K562 (cell line): ENCODE measurements at regions of chr18 and their contacts with region 1.

Region 1: DNA sequence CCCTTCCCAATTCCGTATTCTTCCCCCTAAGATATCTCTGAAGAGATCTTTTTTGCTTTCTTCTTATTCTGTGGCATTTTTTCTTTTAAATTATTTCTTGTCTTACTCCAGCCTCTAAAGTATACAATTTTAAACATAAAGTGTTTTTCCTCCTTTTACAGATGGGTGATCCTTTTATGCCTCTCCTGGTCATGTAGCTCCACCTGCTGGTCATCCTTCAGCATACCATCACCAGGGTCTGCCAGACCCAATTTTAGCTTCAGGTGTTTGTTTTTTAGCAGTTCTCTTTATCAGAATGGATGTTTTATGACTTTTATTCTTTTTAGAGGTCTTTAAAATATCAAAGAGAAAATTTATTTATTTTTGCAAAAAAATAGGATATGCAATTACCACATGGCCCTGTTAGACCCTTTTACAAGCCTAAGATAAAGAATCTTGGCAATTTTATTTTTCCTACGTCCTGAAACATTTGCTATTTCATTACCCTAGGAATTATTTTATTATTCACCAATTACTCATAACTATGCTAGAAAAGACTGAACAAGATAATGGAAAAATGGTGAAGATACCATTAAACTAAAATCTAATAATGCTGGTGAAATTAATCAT is 55.5 kb downstream of the PIGN start:
- DNase-seq: peak; percentile 43 to 64 (median 62)
- ATAC-seq: peak; percentile 79
- H3K4me3 ChIP-seq: no peak overlapping the region
- H3K27ac ChIP-seq: no peak overlapping the region
- H3K4me1 ChIP-seq: no peaks in the 10 kb centered on the region
- H3K27me3 ChIP-seq: no peaks in the 10 kb centered on the region
- CTCF ChIP-seq: peak; percentile 62 to 77 (median 65)
- EP300 ChIP-seq: no peak
- POLR2A ChIP-seq: no peak
- RAD21 ChIP-seq: peak; percentile 72 to 81

Region 2: GRCh38 chr18:61581578-61582201 is 549.7 kb before region 1 on chr18:
- CTCF ChIA-PET with region 1: interaction called, 6 read pairs
- POLR2A ChIA-PET with region 1: no interaction called
- in situ Hi-C with region 1: loop called (anchors 25 kb)
- intact Hi-C with region 1: loop called (anchors 5 kb)
- DNase-seq: peak; percentile 45 to 77 (median 74)
- ATAC-seq: peak; percentile 97
- H3K4me3 ChIP-seq: no peak overlapping the region
- H3K27ac ChIP-seq: no peak overlapping the region
- H3K4me1 ChIP-seq: peaks cover 0 to 4% of the 10 kb centered on the region in 2 experiments; a peak in 2 of 5 replicates
- H3K27me3 ChIP-seq: no peaks in the 10 kb centered on the region
- CTCF ChIP-seq: peak; percentile 62 to 76 (median 69)
- EP300 ChIP-seq: no peak
- POLR2A ChIP-seq: no peak
- RAD21 ChIP-seq: peak; percentile 38 to 60

Region 3: DNA sequence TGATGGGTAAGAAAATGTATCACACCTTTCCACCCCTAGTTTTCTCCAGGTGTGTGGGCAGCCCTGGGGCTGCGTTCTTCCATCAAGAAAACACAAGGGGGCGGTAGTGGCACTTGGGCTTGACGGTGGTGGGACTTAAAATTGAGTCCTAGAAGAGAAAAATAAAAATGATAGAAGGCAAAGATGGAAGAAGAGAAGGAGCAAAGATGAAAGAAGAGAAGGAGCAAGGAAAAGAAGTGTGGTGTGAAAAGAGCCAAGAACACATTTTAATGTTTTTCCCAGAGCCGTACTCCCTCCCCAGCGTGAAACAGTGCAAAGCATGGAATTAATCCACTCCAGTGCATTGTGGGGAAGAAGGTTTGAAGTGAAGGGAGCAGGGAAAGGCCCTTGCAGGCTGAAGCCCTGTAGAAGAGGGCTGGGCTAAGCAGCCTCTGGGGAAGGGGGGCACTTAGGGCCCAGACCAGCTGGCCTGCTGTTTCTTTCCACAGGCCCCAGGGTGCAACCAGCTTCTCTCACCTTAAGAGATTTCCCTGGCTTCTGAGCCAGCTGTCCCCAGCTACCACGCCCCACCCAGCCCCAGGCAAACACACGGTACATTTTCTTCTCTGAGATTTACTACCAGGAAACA is 495.4 kb before region 1 on chr18:
- CTCF ChIA-PET with region 1: interaction called, 3 read pairs
- POLR2A ChIA-PET with region 1: no interaction called
- in situ Hi-C with region 1: no loop called
- intact Hi-C with region 1: loop called (anchors 2 kb)
- DNase-seq: peak; percentile 9 to 35 (median 26)
- ATAC-seq: peak; percentile 77
- H3K4me3 ChIP-seq: no peak overlapping the region
- H3K27ac ChIP-seq: no peak overlapping the region
- H3K4me1 ChIP-seq: no peaks in the 10 kb centered on the region
- H3K27me3 ChIP-seq: no peaks in the 10 kb centered on the region
- CTCF ChIP-seq: peak; percentile 55 to 63 (median 55)
- EP300 ChIP-seq: no peak
- POLR2A ChIP-seq: no peak
- RAD21 ChIP-seq: peak; percentile 22 to 52; a peak in 3 of 4 replicates

Region 4: DNA sequence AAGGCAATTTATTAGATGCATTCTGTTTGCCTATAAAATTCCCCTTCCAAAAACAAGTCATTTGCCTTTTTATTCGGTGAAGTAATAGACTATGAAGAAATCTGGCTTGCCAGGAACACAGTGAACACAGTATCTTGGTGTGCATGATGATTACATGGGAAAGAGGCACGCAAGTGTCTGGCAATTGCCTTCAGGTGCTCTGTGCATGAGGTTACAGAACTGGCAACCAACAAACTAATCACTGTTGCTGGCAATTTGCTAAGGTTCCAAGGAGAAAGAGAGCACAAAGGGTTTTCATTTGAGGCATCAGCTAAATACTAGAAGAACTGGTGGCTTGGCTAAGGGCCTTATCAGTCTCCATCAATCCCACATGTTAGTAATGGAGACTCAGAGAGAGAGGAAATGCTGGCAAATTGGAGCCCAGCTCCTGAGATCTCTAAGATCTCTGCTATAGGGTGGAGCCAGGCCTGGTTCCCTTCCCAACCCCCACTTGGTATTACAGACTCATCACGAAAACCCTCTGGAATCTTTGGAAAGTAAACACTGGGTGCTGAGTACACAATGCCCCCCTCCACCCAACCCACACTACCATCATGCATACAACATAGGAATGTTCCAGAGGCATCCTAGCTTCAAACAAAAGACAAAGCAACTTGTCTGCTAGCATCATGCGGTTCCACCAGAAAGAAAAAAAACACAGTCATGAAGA is 249.0 kb before region 1 on chr18:
- CTCF ChIA-PET with region 1: no interaction called
- POLR2A ChIA-PET with region 1: no interaction called
- in situ Hi-C with region 1: no loop called
- intact Hi-C with region 1: no loop called
- DNase-seq: no peak
- ATAC-seq: no peak
- H3K4me3 ChIP-seq: no peak overlapping the region
- H3K27ac ChIP-seq: no peak overlapping the region
- H3K4me1 ChIP-seq: no peaks in the 10 kb centered on the region
- H3K27me3 ChIP-seq: no peaks in the 10 kb centered on the region
- CTCF ChIP-seq: no peak
- EP300 ChIP-seq: no peak
- POLR2A ChIP-seq: no peak
- RAD21 ChIP-seq: no peak

Region 5: GRCh38 chr18:61901323-61901986 is 229.9 kb before region 1 on chr18:
- CTCF ChIA-PET with region 1: no interaction called
- POLR2A ChIA-PET with region 1: no interaction called
- in situ Hi-C with region 1: no loop called
- intact Hi-C with region 1: loop called (anchors 5 kb)
- DNase-seq: peak; percentile 43 to 58 (median 56)
- ATAC-seq: peak; percentile 96
- H3K4me3 ChIP-seq: no peak overlapping the region
- H3K27ac ChIP-seq: no peak overlapping the region
- H3K4me1 ChIP-seq: no peaks in the 10 kb centered on the region; a peak in 2 of 5 replicates
- H3K27me3 ChIP-seq: no peaks in the 10 kb centered on the region; a peak in 1 of 5 replicates
- CTCF ChIP-seq: peak; percentile 66 to 77 (median 68)
- EP300 ChIP-seq: no peak
- POLR2A ChIP-seq: no peak
- RAD21 ChIP-seq: peak; percentile 26 to 48; a peak in 2 of 4 replicates

Region 6: GRCh38 chr18:61972389-61973264 is 158.8 kb before region 1 on chr18:
- CTCF ChIA-PET with region 1: no interaction called
- POLR2A ChIA-PET with region 1: no interaction called
- in situ Hi-C with region 1: no loop called
- intact Hi-C with region 1: no loop called
- DNase-seq: no peak
- ATAC-seq: no peak
- H3K4me3 ChIP-seq: no peak overlapping the region
- H3K27ac ChIP-seq: no peak overlapping the region
- H3K4me1 ChIP-seq: no peaks in the 10 kb centered on the region; a peak in 1 of 5 replicates
- H3K27me3 ChIP-seq: no peaks in the 10 kb centered on the region
- CTCF ChIP-seq: no peak
- EP300 ChIP-seq: no peak
- POLR2A ChIP-seq: no peak
- RAD21 ChIP-seq: no peak

Region 7: DNA sequence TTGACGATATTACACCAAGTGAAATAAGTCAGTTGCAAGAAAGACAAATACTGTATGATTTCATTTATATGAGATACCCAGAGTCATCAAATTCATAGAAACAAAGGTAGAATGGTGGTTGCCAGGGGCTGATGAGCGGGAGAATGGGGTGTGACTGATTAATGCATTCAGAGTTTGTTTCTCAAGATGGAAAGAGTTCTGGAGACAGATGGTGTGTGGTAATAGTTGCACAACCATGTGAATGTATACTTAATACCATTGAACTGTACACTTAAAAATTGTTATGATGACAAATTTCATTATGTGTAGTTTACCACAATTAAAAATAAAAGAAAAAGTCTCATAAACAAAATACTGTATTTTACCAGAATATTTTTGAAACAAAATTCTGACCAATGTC is 61.8 kb before region 1 on chr18:
- CTCF ChIA-PET with region 1: no interaction called
- POLR2A ChIA-PET with region 1: no interaction called
- in situ Hi-C with region 1: no loop called
- intact Hi-C with region 1: no loop called
- DNase-seq: no peak
- ATAC-seq: no peak
- H3K4me3 ChIP-seq: no peak overlapping the region
- H3K27ac ChIP-seq: no peak overlapping the region
- H3K4me1 ChIP-seq: peaks cover 0 to 12% of the 10 kb centered on the region in 2 experiments; a peak in 2 of 5 replicates
- H3K27me3 ChIP-seq: no peaks in the 10 kb centered on the region
- CTCF ChIP-seq: no peak
- EP300 ChIP-seq: no peak
- POLR2A ChIP-seq: no peak
- RAD21 ChIP-seq: no peak

Region 8: DNA sequence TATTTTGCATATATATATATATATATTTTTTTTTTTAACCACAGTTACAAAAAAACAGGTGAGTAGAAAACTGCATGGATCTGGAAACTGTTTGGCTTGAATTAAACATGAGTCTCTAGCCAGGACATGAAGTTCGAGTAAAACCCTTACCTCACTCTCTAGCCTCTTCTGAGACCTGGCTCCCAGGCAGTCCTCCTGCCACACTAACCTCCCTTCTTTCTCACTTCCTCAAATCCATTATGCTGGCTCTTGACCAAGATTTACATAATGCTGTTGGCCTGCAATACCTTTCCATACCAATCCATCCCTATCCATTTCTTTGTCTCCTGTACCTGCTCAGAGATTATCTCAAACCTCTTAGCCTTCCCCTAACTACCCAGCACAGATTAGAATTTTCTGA is 21.4 kb after region 1 on chr18:
- CTCF ChIA-PET with region 1: no interaction called
- POLR2A ChIA-PET with region 1: no interaction called
- in situ Hi-C with region 1: no loop called
- intact Hi-C with region 1: no loop called
- DNase-seq: no peak
- ATAC-seq: no peak
- H3K4me3 ChIP-seq: no peak overlapping the region
- H3K27ac ChIP-seq: no peak overlapping the region
- H3K4me1 ChIP-seq: no peaks in the 10 kb centered on the region
- H3K27me3 ChIP-seq: no peaks in the 10 kb centered on the region
- CTCF ChIP-seq: no peak
- EP300 ChIP-seq: no peak
- POLR2A ChIP-seq: no peak
- RAD21 ChIP-seq: no peak